ENCODE measurements at regions of chr1 and their contacts with region 1.

Region 1: DNA sequence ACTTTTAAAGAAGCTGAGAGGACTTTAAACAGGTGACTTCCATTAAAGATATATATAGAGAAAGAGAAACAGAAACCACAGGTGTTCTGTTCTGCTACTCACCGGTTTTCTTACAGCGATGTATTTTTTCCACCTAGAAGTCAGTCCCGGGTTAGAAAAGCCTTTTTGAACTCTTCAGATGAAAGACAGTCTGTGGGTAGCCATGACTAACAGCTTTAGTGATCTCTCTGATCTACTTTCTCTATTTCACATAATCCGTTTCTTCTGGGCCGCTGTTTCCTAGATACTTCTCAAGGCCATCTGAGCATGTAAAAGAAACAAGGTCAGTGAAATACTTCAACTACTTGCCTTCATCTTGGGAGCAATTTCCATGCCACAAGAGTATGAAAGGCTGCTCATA is 25.1 kb downstream of the WDR64 start:
- DNase-seq: peak; percentile 84
- H3K4me3 Mint-ChIP-seq: peak overlapping the region; percentile 53
- H3K27ac Mint-ChIP-seq: peak overlapping the region; percentile 14
- H3K4me1 Mint-ChIP-seq: peaks cover 10% of the 10 kb centered on the region
- H3K27me3 Mint-ChIP-seq: peaks cover 14% of the 10 kb centered on the region

Region 2: GRCh38 chr1:241592273-241592958 is 84.8 kb before region 1 on chr1:
- intact Hi-C with region 1: loop called (anchors 1 kb)
- DNase-seq: no peak
- H3K4me3 Mint-ChIP-seq: no peak overlapping the region
- H3K27ac Mint-ChIP-seq: peak overlapping the region; percentile 19
- H3K4me1 Mint-ChIP-seq: peaks cover 3% of the 10 kb centered on the region
- H3K27me3 Mint-ChIP-seq: no peaks in the 10 kb centered on the region

Region 3: GRCh38 chr1:241640029-241640818 is 37.0 kb before region 1 on chr1 and contains the starts of genes CHML and OPN3:
- intact Hi-C with region 1: loop called (anchors 1 kb)
- DNase-seq: peak; percentile 98
- H3K4me3 Mint-ChIP-seq: peak within 1 kb of the TSS; percentile 97
- H3K27ac Mint-ChIP-seq: peak within 1 kb of the TSS; percentile 92
- H3K4me1 Mint-ChIP-seq: peaks cover 31% of the 10 kb centered on the region
- H3K27me3 Mint-ChIP-seq: no peaks in the 10 kb centered on the region
- total RNA-seq, gene CHML: 19.5 and 21.4 TPM in 2 replicates
- total RNA-seq, gene OPN3: 11.2 and 11.6 TPM in 2 replicates

Region 4: GRCh38 chr1:241716915-241717656 is 39.9 kb after region 1 on chr1:
- intact Hi-C with region 1: loop called (anchors 1 kb)
- DNase-seq: no peak
- H3K4me3 Mint-ChIP-seq: no peak overlapping the region
- H3K27ac Mint-ChIP-seq: no peak overlapping the region
- H3K4me1 Mint-ChIP-seq: peaks cover 4% of the 10 kb centered on the region
- H3K27me3 Mint-ChIP-seq: peaks cover 19% of the 10 kb centered on the region

Measured in activated CD4-positive, alpha-beta T cell treated with anti-CD3 and anti-CD28 coated beads, Interleukin-2, amount 10 ng/mL, durations not matched to agents 24 days and 14 days (primary cell).